ENCODE measurements at regions of chr22 and their contacts with region 1.

Region 1: DNA sequence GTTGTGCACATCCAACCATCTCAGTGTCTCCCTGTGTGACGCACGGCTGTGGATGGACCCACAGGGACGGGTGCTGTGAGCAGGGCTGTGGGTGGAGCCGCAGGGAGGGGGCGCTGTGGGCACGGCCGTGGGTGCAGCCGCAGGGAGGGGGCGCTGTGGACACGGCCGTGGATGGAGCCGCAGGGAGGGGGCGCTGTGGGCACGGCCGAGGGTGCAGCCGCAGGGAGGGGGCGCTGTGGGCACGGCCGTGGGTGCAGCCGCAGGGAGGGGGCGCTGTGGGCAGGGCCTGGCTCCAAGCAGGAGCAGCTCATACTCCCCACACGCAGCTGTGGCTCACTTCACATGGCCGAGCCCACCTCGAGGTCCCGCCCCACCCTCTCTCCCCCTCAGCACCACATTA is 6.0 kb upstream of the MAPK11 start:
- DNase-seq: peak; percentile 70
- H3K4me3 Mint-ChIP-seq: no peak overlapping the region
- H3K27ac Mint-ChIP-seq: no peak overlapping the region
- H3K4me1 Mint-ChIP-seq: no peaks in the 10 kb centered on the region
- H3K27me3 Mint-ChIP-seq: no peaks in the 10 kb centered on the region

Region 2: DNA sequence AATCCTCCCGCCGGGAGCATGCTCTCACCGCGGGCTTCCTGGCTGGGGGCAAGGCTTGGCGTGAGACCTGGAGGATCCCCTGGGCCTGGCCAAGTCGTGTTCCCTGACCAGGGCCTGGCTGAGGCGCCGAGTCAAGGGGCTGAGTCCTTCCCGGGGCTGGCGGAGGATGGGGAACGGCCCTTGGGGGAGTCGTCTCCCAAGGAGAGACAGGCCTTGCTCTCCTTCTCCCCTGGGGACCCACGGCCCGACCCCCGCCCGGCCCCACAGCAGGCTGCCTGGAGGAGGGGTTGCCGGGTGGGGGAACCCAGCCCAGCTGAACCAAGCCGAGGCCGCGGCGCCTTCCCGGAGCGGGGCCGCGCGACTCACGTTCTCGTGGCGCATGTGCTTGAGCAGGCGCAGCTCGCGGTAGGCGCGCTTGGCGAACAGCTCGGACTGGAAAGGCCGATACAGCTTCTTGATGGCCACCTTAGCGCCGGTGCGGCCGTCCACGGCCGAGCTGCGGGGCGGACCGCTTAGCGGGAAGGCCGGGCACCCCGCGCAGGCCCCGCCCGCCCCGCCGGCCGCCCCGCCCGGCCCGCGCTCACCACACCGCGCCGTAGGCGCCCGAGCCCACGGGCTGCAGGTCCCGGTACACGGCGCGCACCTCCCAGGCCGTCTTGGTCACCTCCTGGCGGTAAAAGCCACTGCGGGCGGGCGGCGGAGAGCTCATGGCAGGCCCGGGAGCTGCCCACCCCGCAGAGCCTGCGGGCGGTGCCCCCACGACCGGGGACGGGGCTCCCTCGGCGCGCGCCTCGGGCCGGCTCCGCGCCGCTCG is 15.1 kb before region 1 on chr22:
- CTCF ChIA-PET with region 1: no interaction called
- intact Hi-C with region 1: no loop called
- DNase-seq: no peak
- H3K4me3 Mint-ChIP-seq: peak overlapping the region; percentile 50
- H3K27ac Mint-ChIP-seq: no peak overlapping the region
- H3K4me1 Mint-ChIP-seq: peaks cover 6% of the 10 kb centered on the region
- H3K27me3 Mint-ChIP-seq: peaks cover 26% of the 10 kb centered on the region

Region 3: GRCh38 chr22:50314455-50315288 is 38.5 kb after region 1 on chr22:
- CTCF ChIA-PET with region 1: no interaction called
- intact Hi-C with region 1: loop called (anchors 5 kb)
- DNase-seq: peak; percentile 87
- H3K4me3 Mint-ChIP-seq: peak overlapping the region; percentile 81
- H3K27ac Mint-ChIP-seq: peak overlapping the region; percentile 70
- H3K4me1 Mint-ChIP-seq: peaks cover 17% of the 10 kb centered on the region
- H3K27me3 Mint-ChIP-seq: no peaks in the 10 kb centered on the region

Region 4: GRCh38 chr22:50341977-50342650 is 66.0 kb after region 1 on chr22:
- CTCF ChIA-PET with region 1: interaction called, 25 read pairs
- intact Hi-C with region 1: loop called (anchors 1 kb)
- DNase-seq: peak; percentile 94
- H3K4me3 Mint-ChIP-seq: peak overlapping the region; percentile 71
- H3K27ac Mint-ChIP-seq: peak overlapping the region; percentile 82
- H3K4me1 Mint-ChIP-seq: peaks cover 8% of the 10 kb centered on the region
- H3K27me3 Mint-ChIP-seq: no peaks in the 10 kb centered on the region

Measured in activated naive CD4-positive, alpha-beta T cell treated with anti-CD3 and anti-CD28 coated beads for 36 hours (primary cell).